ENCODE measurements at regions of chr5 and their contacts with region 1.

Region 1: DNA sequence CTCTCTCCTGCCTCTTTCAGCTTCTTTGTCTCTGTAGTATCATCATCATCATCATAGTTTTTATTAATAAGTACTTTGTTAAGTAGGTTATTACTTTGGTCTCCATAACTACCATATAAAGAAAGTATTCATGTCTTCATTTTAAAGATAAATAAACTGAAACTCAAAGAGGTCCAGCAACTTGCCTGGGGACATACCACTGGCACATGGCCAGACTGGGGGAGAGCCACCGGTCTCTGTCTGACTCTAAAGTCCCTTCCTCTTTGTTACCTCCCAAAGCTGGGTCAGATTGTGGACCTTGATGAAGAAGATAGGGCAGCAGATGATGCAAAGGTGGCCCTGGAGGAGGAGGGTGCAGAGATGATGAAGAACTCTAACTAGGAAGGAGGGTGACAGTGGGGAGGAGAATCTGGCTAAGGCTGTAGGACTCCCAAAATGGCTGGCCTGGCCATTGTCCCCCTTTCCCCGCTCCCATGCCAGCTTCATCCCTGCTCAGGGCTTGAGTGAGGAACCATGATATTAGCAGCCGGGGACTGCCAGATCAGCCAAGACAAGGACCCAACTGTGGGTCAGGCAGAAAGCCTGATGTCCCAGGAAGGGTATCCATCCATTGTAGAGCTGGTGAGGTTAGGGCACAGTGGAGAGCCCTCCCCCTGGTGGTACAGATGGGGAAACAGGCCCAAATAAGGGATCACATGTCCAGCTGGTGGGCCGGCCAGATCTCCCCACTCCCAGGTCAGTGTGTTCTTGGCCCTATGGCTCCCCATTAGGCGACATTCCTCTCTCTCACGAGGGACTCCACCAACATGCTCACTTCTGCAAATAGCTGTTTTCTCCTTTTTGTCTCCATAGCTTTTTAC is 8.7 kb downstream of the CDX1 start:
- DNase-seq: peak; percentile 83
- H3K4me3 ChIP-seq: no peak overlapping the region
- H3K27ac ChIP-seq: no peak overlapping the region
- H3K4me1 ChIP-seq: no peaks in the 10 kb centered on the region; a peak in 1 of 4 replicates
- H3K27me3 ChIP-seq: no peaks in the 10 kb centered on the region
- CTCF ChIP-seq: peak; percentile 60
- EP300 ChIP-seq: no peak
- RAD21 ChIP-seq: peak; percentile 62

Region 2: DNA sequence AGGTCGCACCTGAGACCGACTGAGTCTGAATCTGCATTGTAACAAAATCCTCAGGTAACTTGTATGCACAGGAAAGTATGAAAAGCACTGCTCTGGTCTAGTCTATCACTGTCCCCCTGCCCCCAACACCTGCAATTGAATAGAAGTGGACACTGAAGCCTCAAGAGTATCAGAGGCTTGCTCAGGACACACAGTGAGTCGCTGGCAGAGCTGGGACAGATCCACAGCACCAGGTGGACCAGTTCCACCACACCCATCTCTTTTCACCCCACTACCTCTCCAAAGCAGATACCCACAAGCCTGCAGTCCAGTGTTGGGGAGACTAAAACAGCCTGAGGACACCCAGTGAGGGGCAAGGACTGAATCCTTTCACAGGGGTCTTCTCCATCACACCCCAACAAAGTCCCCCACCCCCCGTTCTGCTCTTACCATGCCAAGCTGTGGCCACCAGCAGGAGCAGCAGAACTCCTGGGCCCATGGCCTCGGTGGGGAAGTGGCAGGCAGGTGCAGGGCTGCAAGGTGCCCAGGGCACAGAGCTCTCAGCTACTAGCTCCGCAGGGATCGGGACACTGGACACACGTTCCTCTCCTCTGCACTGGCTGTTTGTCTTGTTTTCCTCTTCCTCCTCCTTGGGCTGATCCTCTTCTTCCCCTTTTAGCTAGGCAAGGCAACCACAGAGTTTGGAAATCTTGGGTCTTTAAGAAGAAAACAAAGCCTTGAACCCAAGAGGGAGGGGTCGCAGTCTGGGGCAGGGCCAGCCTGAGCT is 89.2 kb before region 1 on chr5 and contains the start of gene CSF1R:
- CTCF ChIA-PET with region 1: no interaction called
- POLR2A ChIA-PET with region 1: no interaction called
- DNase-seq: no peak
- H3K4me3 ChIP-seq: no peak within 1 kb of the TSS
- H3K27ac ChIP-seq: no peak within 1 kb of the TSS
- H3K4me1 ChIP-seq: no peaks in the 10 kb centered on the region; a peak in 1 of 4 replicates
- H3K27me3 ChIP-seq: peaks cover 10% of the 10 kb centered on the region; the same call in 1 of the 2 replicates
- CTCF ChIP-seq: no peak
- EP300 ChIP-seq: no peak
- RAD21 ChIP-seq: no peak
- polyA plus RNA-seq, gene CSF1R: 0.15 and 0.25 TPM in 2 replicates

Region 3: DNA sequence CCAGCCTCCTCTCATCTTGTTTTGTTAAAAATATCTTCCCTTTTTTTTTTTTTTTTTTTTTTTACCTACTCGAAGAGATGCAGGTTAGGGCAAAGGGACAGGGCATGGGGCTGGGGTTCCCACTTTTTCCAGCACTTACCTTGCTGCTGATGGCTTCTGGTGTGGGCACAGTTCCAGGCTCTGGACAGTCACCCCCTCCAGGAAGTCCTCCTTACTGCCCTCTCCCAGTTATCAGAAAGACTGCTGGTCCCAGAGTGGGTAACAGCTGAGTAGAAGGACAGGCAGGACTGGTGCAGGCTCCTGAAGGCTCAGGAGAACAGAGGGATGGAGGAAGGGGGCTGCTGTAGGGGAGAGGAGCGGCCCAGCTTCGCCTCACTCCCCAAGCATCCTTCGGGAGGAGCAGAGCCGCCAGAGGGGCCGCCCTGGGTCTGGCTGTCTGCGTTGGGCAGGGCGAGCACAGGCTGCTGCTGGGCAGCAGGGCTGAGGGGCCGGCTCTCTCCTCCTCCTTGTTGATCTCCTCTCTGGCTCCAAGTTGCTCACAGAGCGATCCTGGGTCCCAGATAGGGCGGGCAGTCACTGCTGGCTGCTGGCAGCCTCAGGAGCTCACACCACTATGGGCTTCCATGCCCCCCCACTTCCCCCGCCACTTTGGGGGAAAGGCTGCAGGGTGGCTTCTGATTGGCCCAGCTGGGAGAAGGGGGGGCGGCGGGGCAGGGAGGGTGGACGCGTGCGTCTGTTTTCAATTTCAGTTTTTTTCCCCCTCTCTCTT is 19.9 kb before region 1 on chr5 and contains the start of gene PDGFRB:
- CTCF ChIA-PET with region 1: interaction called, 10 read pairs
- POLR2A ChIA-PET with region 1: no interaction called
- DNase-seq: peak; percentile 88
- H3K4me3 ChIP-seq: peak within 1 kb of the TSS; percentile 67 to 96
- H3K27ac ChIP-seq: peak within 1 kb of the TSS; percentile 94 to 98
- H3K4me1 ChIP-seq: peaks cover 43 to 86% of the 10 kb centered on the region in 2 experiments
- H3K27me3 ChIP-seq: no peaks in the 10 kb centered on the region
- CTCF ChIP-seq: no peak; the same call in 1 of the 2 replicates
- EP300 ChIP-seq: peak; percentile 56 to 59; a peak in 2 of 4 replicates
- RAD21 ChIP-seq: peak; percentile 4; the same call in 1 of the 2 replicates
- polyA plus RNA-seq, gene PDGFRB: 25.9 and 32.1 TPM in 2 replicates

Region 4: GRCh38 chr5:150161242-150162141 is 13.8 kb before region 1 on chr5:
- CTCF ChIA-PET with region 1: interaction called, 14 read pairs
- POLR2A ChIA-PET with region 1: interaction called, 4 read pairs
- DNase-seq: peak; percentile 89
- H3K4me3 ChIP-seq: no peak overlapping the region
- H3K27ac ChIP-seq: peak overlapping the region in 1 of 2 experiments; percentile 96; a peak in 2 of 4 replicates
- H3K4me1 ChIP-seq: peaks cover 26 to 56% of the 10 kb centered on the region in 2 experiments
- H3K27me3 ChIP-seq: no peaks in the 10 kb centered on the region
- CTCF ChIP-seq: peak; percentile 94
- EP300 ChIP-seq: no peak
- RAD21 ChIP-seq: peak; percentile 80

Region 5: DNA sequence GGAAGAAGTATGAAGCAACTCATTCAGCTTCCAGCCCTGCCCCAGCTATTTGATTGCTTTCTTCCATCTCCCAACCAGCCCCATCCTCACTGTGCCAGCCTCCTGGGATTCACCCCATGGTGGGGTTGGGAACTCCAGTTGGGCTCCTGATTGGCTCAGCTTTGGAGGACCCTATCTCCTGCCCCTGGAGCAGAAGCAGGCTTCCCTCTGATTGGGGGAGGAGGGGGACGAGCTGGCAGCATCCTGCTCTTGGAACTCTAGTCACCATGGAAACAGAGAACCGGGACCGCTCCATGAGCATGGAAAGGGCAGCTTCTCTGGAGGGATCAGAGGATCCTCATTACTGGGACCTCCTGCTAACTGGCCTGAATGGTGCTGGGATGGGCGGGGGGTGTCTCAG is 17.2 kb after region 1 on chr5:
- CTCF ChIA-PET with region 1: interaction called, 22 read pairs
- POLR2A ChIA-PET with region 1: no interaction called
- DNase-seq: no peak
- H3K4me3 ChIP-seq: no peak overlapping the region
- H3K27ac ChIP-seq: no peak overlapping the region
- H3K4me1 ChIP-seq: peaks cover 0 to 2% of the 10 kb centered on the region in 2 experiments; a peak in 1 of 4 replicates
- H3K27me3 ChIP-seq: peaks cover 39% of the 10 kb centered on the region
- CTCF ChIP-seq: no peak
- EP300 ChIP-seq: no peak
- RAD21 ChIP-seq: no peak